Ovary (tissue), 10 donors: ENCODE measurements at regions of chr5 and their contacts with region 1.

Region 1: GRCh38 chr5:35067985-35068384 is 20.2 kb upstream of the AGXT2 start:
- DNase-seq: no peak
- H3K4me3 ChIP-seq: no peak overlapping the region
- H3K27ac ChIP-seq: no peak overlapping the region
- H3K4me1 ChIP-seq: no peaks in the 10 kb centered on the region
- H3K27me3 ChIP-seq: no peaks in the 10 kb centered on the region
- CTCF ChIP-seq: no peak
- EP300 ChIP-seq: no peak
- POLR2A ChIP-seq: no peak

Region 2: GRCh38 chr5:35182541-35183535 is 114.9 kb after region 1 on chr5:
- intact Hi-C with region 1: loop called in 1 of 4 experiments (anchors 2 kb)
- DNase-seq: peak in 4 of 5 donors; percentile 24 to 55 (median 46)
- H3K4me3 ChIP-seq: no peak overlapping the region
- H3K27ac ChIP-seq: no peak overlapping the region
- H3K4me1 ChIP-seq: no peaks in the 10 kb centered on the region
- H3K27me3 ChIP-seq: no peaks in the 10 kb centered on the region
- CTCF ChIP-seq: no peak
- EP300 ChIP-seq: no peak
- POLR2A ChIP-seq: no peak

Region 3: DNA sequence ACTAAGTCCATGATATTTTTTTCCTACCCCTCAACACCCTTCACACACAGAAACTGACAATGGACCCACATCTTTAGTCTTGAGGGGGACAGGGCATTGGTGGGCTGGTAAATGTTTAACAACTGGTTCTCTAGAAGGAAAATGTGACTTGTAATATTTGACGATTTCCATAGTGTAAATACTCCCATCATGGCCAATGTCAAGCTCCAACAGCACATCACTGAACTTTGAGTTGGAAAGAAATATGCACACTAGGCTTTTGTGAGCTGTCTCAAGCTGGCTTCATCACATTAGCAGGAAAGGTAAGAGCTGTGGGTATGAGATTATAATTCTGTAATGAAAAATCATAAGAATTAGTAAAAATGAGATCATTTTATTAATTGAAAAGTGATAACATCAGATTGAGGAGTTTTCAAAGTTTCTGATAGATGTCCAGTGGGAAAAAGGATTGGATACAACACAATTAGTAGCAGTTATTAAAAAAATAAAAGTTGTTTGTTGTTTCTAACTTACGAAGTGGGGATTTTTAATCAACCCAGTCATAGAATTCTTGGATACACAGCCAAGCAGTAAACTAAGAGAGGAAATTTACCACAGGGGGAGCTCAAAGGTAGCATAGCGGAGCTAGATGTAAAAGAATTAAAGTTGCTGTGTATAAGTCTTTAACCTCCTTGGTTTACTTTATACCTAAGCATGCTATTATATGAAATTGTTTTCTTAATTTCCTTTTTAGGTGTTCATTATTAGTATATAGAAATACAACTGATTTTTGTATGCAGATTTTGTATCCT is 352.4 kb after region 1 on chr5:
- intact Hi-C with region 1: no loop called
- DNase-seq: no peak
- H3K4me3 ChIP-seq: no peak overlapping the region
- H3K27ac ChIP-seq: no peak overlapping the region
- H3K4me1 ChIP-seq: peaks cover 1% of the 10 kb centered on the region
- H3K27me3 ChIP-seq: no peaks in the 10 kb centered on the region
- CTCF ChIP-seq: no peak
- EP300 ChIP-seq: no peak
- POLR2A ChIP-seq: no peak